ENCODE measurements at regions of chr10 and their contacts with region 1.

Region 1: GRCh38 chr10:12042797-12043651 is at the start of gene UPF2:
- DNase-seq: peak; percentile 97 to 98 (median 98)
- H3K4me3 ChIP-seq: peak within 1 kb of the TSS; percentile 81 to 88
- H3K4me3 Mint-ChIP-seq: peak within 1 kb of the TSS; percentile 93 to 99 (median 97)
- H3K27ac ChIP-seq: peak within 1 kb of the TSS; percentile 94
- H3K27ac Mint-ChIP-seq: peak within 1 kb of the TSS; percentile 98 to 100 (median 100)
- H3K4me1 ChIP-seq: peaks cover 32% of the 10 kb centered on the region
- H3K4me1 Mint-ChIP-seq: peaks cover 19 to 51% (median 36%) of the 10 kb centered on the region in 4 donors
- H3K27me3 ChIP-seq: no peaks in the 10 kb centered on the region
- H3K27me3 Mint-ChIP-seq: peaks cover 1 to 2% of the 10 kb centered on the region in 2 donors
- total RNA-seq, gene UPF2: 35.2 to 38.6 TPM

Region 2: DNA sequence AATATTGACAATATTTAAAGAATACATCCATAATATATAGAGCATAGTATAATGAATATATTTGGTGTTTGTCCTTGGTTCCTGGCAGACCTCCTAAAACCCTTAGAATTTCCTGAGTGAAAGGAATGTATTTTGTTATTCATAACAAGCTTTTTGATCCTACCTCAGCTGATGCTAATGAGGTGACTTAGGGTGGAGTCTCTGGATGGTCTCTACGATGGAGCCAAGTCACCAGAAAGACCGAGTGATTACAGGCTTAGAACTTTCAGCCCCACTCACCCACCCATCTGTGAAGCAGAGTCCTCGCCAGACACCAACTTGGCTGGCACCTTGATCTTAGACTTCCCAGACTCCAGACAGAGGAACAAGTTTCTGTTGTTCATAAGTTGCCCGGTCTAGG is 36.4 kb before region 1 on chr10:
- CTCF ChIA-PET with region 1: no interaction called
- POLR2A ChIA-PET with region 1: no interaction called
- intact Hi-C with region 1: loop called (anchors 5 kb)
- DNase-seq: no peak
- H3K4me3 ChIP-seq: no peak overlapping the region
- H3K4me3 Mint-ChIP-seq: no peak overlapping the region
- H3K27ac ChIP-seq: no peak overlapping the region
- H3K27ac Mint-ChIP-seq: peak overlapping the region in 3 of 7 donors; percentile 6 to 75 (median 44)
- H3K4me1 ChIP-seq: no peaks in the 10 kb centered on the region
- H3K4me1 Mint-ChIP-seq: peaks cover 0 to 11% (median 5%) of the 10 kb centered on the region in 4 donors
- H3K27me3 ChIP-seq: no peaks in the 10 kb centered on the region
- H3K27me3 Mint-ChIP-seq: no peaks in the 10 kb centered on the region

Region 3: GRCh38 chr10:12031404-12031803 is 11.6 kb before region 1 on chr10:
- CTCF ChIA-PET with region 1: interaction called, 5 read pairs
- POLR2A ChIA-PET with region 1: interaction called, 21 read pairs
- intact Hi-C with region 1: no loop called
- DNase-seq: no peak
- H3K4me3 ChIP-seq: no peak overlapping the region
- H3K4me3 Mint-ChIP-seq: no peak overlapping the region
- H3K27ac ChIP-seq: no peak overlapping the region
- H3K27ac Mint-ChIP-seq: peak overlapping the region in 2 of 7 donors; percentile 9 to 59
- H3K4me1 ChIP-seq: peaks cover 14% of the 10 kb centered on the region
- H3K4me1 Mint-ChIP-seq: peaks cover 23 to 44% (median 28%) of the 10 kb centered on the region in 4 donors
- H3K27me3 ChIP-seq: no peaks in the 10 kb centered on the region
- H3K27me3 Mint-ChIP-seq: no peaks in the 10 kb centered on the region

Region 4: DNA sequence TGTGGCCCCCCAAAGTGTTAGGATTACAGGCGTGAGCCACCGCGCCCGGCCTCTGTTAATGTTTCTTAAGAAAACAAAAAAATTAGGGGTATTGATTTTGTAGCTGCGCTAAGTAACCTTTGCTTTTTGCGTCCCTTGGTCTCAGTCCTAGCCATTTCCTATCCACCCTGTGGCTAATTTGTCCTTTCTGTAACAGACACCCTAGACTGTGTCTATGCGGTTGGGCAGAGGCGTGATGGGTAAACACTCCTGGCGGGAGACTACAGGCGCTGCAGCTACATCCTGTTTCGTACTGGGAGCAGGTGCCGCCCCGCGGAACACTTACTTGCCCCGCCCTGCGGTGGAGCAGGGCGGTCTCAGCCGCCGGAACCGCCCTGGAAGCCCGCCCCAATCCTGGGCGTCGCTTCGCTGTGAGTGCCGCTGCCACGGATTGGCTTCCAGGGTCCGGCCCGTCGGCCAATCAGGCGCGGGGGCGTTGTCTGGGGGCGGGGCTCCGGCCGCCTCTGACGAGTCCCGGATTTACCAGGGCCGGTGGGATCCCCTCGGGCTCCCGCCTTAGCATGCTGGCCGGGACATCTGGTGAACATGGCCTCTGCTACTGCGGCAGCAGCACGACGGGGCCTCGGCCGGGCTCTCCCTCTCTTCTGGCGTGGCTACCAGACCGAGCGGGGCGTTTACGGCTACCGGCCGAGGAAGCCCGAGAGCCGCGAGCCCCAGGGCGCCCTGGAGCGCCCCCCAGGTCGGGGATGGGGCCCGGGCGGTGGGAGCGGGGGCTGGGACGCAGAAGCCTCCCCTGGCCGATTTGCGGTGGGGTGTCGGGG is 25.6 kb after region 1 on chr10 and contains the start of gene DHTKD1:
- CTCF ChIA-PET with region 1: interaction called, 5 read pairs
- POLR2A ChIA-PET with region 1: interaction called, 50 read pairs
- intact Hi-C with region 1: loop called (anchors 1 kb)
- DNase-seq: peak; percentile 97 to 98 (median 97)
- H3K4me3 ChIP-seq: peak within 1 kb of the TSS; percentile 52 to 83
- H3K4me3 Mint-ChIP-seq: peak within 1 kb of the TSS; percentile 85 to 93 (median 89)
- H3K27ac ChIP-seq: peak within 1 kb of the TSS; percentile 83
- H3K27ac Mint-ChIP-seq: peak within 1 kb of the TSS; percentile 70 to 97 (median 96)
- H3K4me1 ChIP-seq: peaks cover 16% of the 10 kb centered on the region
- H3K4me1 Mint-ChIP-seq: peaks cover 11 to 24% (median 18%) of the 10 kb centered on the region in 4 donors
- H3K27me3 ChIP-seq: no peaks in the 10 kb centered on the region
- H3K27me3 Mint-ChIP-seq: peaks cover 0 to 2% of the 10 kb centered on the region in 2 donors
- total RNA-seq, gene DHTKD1: 15.7 to 16.5 TPM

Region 5: DNA sequence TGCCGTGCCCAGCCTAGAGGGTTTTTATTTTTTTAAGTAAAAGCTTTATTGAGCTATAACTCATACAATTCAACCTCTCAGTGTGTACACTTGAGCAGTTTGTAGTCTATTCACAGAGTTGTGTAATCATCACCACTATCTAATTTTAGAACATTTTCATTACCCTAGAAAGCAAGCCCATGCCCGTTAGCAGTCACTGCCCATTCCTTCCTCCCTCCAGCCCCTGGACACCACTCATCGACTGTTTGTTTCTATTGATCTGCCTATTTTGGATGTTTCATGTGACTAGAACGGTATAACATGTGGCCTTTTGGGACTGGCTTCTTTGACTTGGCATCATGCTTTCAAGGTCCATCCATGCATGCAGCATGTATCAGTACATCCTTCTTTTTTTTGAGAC is 60.8 kb after region 1 on chr10:
- CTCF ChIA-PET with region 1: no interaction called
- POLR2A ChIA-PET with region 1: no interaction called
- intact Hi-C with region 1: no loop called
- DNase-seq: no peak
- H3K4me3 ChIP-seq: no peak overlapping the region
- H3K4me3 Mint-ChIP-seq: peak overlapping the region in 1 of 8 donors; percentile 5
- H3K27ac ChIP-seq: no peak overlapping the region
- H3K27ac Mint-ChIP-seq: peak overlapping the region in 1 of 7 donors; percentile 58
- H3K4me1 ChIP-seq: no peaks in the 10 kb centered on the region
- H3K4me1 Mint-ChIP-seq: peaks cover 0 to 1% (median 0%) of the 10 kb centered on the region in 4 donors
- H3K27me3 ChIP-seq: no peaks in the 10 kb centered on the region
- H3K27me3 Mint-ChIP-seq: no peaks in the 10 kb centered on the region

Region 6: DNA sequence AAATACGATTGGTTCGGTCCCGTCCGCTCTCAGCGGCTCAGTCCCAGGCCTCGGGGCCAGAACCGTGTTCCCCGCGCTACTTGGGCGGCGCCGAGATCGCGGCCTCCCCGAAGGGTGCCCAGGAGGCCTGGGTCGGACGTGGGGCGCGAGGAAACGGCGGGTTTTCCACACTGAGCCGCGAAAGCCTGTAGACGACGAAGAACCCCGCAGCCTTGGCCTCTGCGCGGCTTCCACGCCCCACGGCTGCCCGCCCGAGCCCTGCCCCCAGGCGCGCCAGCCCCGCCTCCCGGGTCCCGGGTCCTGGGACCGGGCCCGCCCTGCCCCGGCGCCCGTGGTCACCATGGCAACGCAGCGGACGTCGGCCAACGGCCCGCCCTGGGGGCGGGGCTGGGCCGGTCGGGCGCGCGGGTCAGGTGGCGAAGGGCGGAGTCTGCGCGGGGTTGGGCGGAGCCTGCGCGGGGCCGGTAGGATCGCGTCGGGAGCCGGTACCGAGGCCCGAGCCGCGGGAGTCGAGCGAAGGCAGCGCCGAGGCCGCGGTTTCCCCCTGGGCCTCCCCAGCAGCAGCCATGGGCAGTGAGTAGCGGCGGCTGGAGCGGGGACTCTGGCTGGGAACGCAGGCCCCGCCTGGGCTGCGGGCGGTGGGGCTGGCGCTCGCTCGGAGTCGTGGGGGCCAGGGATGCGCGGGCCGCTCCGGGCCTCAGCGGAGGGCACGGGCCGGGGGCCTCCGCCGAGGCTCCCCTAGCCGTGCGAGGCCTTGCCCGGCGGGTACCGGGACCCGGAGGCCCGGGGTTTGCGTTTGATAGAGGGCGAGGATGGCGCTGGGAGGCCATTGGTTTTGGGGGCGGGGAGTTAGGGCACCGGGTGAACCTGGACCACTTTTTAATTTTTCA is 86.4 kb after region 1 on chr10 and contains the start of gene SEC61A2:
- CTCF ChIA-PET with region 1: no interaction called
- POLR2A ChIA-PET with region 1: interaction called, 12 read pairs
- intact Hi-C with region 1: loop called (anchors 1 kb)
- DNase-seq: peak; percentile 93 to 99 (median 97)
- H3K4me3 ChIP-seq: peak within 1 kb of the TSS; percentile 55 to 79
- H3K4me3 Mint-ChIP-seq: peak within 1 kb of the TSS; percentile 88 to 93 (median 91)
- H3K27ac ChIP-seq: peak within 1 kb of the TSS; percentile 72
- H3K27ac Mint-ChIP-seq: peak within 1 kb of the TSS; percentile 78 to 96 (median 93)
- H3K4me1 ChIP-seq: peaks cover 20% of the 10 kb centered on the region
- H3K4me1 Mint-ChIP-seq: peaks cover 11 to 33% (median 22%) of the 10 kb centered on the region in 4 donors
- H3K27me3 ChIP-seq: no peaks in the 10 kb centered on the region
- H3K27me3 Mint-ChIP-seq: no peaks in the 10 kb centered on the region
- total RNA-seq, gene SEC61A2: 12.2 to 13.4 TPM

Region 7: DNA sequence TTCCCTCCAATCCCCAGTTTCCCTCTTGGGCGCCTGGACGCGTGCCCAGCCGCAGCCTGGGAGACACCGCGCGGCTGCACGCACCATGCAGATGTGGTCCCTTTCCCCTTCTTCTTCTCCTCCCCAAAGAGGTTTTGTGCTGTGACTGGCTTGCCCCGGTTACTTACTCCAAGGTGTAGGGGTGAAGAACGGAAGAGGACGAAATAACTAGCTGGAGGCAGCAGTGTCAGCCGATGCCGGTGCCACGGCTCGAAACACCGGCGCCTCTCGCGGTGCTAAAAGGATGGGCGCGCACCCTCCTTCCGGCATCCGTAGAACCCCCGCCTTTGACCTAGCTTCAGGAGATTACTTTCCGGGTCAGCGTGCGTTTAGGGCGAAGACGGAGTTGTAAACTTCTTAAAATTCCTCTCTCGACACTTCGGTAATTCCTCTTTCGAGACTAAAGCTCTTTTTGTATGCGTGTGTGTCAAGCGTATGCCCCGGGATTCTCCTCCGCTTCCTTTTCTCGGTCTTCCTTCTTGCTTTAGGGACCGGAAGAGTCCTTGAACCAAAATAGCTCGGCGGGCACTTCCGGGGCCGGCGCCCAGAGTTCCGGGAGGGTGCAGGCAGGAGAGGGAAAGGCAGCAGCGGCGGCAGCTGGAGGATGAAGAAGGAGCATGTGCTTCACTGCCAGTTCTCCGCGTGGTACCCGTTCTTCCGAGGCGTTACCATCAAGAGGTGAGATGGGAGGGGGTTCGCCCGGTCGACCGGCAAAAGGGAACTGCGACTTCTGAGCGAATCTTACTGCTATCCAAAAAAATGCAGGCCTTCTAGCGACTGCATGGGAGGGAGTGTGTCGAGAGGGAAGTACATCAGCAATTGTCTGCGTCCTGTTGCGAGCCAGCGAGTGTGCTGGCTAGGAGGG is 152.8 kb after region 1 on chr10 and contains the starts of genes CDC123 and NUDT5:
- CTCF ChIA-PET with region 1: no interaction called
- POLR2A ChIA-PET with region 1: interaction called, 20 read pairs
- intact Hi-C with region 1: loop called (anchors 1 kb)
- DNase-seq: peak; percentile 85 to 89 (median 88)
- H3K4me3 ChIP-seq: peak within 1 kb of the TSS; percentile 78 to 93
- H3K4me3 Mint-ChIP-seq: peak within 1 kb of the TSS; percentile 95 to 99 (median 98)
- H3K27ac ChIP-seq: peak within 1 kb of the TSS; percentile 96
- H3K27ac Mint-ChIP-seq: peak within 1 kb of the TSS; percentile 97 to 100 (median 99)
- H3K4me1 ChIP-seq: peaks cover 43% of the 10 kb centered on the region
- H3K4me1 Mint-ChIP-seq: peaks cover 36 to 72% (median 54%) of the 10 kb centered on the region in 4 donors
- H3K27me3 ChIP-seq: no peaks in the 10 kb centered on the region
- H3K27me3 Mint-ChIP-seq: no peaks in the 10 kb centered on the region
- total RNA-seq, gene CDC123: 40.7 to 41.8 TPM
- total RNA-seq, gene NUDT5: 55.6 to 61.2 TPM

Region 8: GRCh38 chr10:13348216-13349017 is 1305.4 kb after region 1 on chr10 and contains the start of gene SEPHS1:
- CTCF ChIA-PET with region 1: no interaction called
- POLR2A ChIA-PET with region 1: no interaction called
- intact Hi-C with region 1: loop called (anchors 5 kb)
- DNase-seq: peak; percentile 79 to 87 (median 80)
- H3K4me3 ChIP-seq: peak within 1 kb of the TSS; percentile 89 to 93
- H3K4me3 Mint-ChIP-seq: peak within 1 kb of the TSS; percentile 94 to 97 (median 96)
- H3K27ac ChIP-seq: peak within 1 kb of the TSS; percentile 75
- H3K27ac Mint-ChIP-seq: peak within 1 kb of the TSS; percentile 88 to 97 (median 96)
- H3K4me1 ChIP-seq: peaks cover 50% of the 10 kb centered on the region
- H3K4me1 Mint-ChIP-seq: peaks cover 33 to 76% (median 51%) of the 10 kb centered on the region in 4 donors
- H3K27me3 ChIP-seq: no peaks in the 10 kb centered on the region
- H3K27me3 Mint-ChIP-seq: no peaks in the 10 kb centered on the region
- total RNA-seq, gene SEPHS1: 27.2 to 30.6 TPM